Ascending aorta (tissue), 2 donors: ENCODE measurements at regions of chr3 and their contacts with region 1.

Region 1: DNA sequence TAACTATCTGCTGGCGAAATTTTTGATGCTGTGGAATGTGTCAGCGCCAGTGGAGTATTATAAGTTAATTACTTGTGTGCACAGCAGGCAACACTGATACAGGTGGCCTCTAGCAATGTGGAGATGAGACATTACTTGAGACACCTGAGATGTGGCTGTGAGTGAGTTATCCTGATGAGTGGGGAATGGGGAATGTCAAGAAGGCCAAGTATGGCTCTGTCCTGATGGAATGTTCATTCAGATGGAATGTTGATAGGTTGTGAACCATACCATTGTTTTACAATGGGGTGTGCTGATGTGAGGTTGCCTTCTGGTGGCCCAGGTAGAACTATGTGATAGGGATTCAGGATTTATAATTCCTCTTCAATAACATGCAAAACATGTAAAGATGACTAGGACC is 404.8 kb downstream of the PTPRG start:
- DNase-seq: no peak
- H3K4me3 ChIP-seq: no peak overlapping the region
- H3K27ac ChIP-seq: no peak overlapping the region
- H3K4me1 ChIP-seq: peaks cover 0 to 7% of the 10 kb centered on the region in 2 donors
- H3K27me3 ChIP-seq: no peaks in the 10 kb centered on the region
- CTCF ChIP-seq: no peak

Region 2: DNA sequence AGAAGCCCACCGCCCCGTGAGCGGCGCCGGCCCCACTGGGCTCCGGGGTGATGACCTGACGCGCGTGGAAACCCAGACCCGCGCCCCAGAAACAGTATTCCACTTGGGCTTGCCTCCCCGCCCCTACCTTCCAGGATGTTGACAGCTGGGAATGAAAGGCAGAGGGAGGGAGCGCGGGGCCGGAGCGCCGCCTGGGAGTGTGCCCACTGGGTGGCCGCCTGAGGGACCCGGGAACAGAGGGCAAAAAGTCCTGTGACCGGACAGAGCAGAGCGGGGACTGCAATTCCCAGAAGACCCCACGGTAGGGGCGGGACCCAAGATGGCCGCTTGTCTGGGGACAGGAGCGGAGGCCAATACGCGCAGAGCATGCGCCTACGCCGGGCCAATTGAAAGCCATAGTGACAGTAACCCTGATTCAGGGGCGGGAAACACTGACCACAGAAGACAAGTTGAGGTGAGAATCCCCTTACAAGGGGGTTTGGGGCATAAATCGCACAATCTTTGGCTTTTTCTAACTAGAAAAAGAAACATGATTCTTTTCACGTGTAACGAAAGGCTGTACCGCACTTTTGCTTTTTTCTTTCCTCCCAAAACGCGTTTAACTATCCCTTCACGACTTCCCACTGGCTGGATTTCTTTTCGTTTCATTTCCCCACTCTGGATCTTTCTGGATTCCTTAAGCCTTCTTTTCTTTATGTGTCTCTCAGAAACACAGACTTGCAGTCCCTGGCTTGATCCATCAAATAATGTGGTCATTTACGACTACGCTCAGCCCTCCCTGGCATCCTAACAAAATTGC is 714.8 kb before region 1 on chr3 and contains the start of gene FHIT:
- intact Hi-C with region 1: loop called (anchors 10 kb)
- DNase-seq: peak; percentile 87 to 96
- H3K4me3 ChIP-seq: peak within 1 kb of the TSS; percentile 66 to 76
- H3K27ac ChIP-seq: peak within 1 kb of the TSS; percentile 15 to 34
- H3K4me1 ChIP-seq: peaks cover 6 to 7% of the 10 kb centered on the region in 2 donors
- H3K27me3 ChIP-seq: no peaks in the 10 kb centered on the region
- CTCF ChIP-seq: no peak
- total RNA-seq, gene FHIT: 0.21 TPM

Region 3: GRCh38 chr3:62020515-62021105 is 54.4 kb after region 1 on chr3:
- intact Hi-C with region 1: no loop called
- DNase-seq: no peak
- H3K4me3 ChIP-seq: no peak overlapping the region
- H3K27ac ChIP-seq: no peak overlapping the region
- H3K4me1 ChIP-seq: no peaks in the 10 kb centered on the region
- H3K27me3 ChIP-seq: no peaks in the 10 kb centered on the region
- CTCF ChIP-seq: no peak

Region 4: DNA sequence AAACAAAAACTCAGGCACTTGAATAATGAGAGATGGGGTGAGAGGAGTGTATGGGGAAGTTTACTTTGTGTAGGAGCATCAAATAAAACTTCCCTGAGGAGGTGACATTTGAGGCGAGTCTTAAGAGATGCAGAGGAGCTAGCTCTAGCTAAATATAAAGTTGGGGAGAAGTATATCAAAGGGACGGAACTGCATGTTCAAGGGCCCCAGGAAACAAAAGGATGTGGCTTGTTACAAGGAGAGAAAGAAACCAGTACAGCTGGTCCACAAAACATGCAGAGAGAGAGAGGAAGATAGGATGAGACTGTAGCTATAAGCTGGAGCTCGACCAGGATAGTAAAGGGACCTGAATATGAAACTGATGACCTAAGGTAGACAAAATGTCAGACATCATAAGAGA is 389.5 kb after region 1 on chr3:
- intact Hi-C with region 1: no loop called
- DNase-seq: no peak
- H3K4me3 ChIP-seq: no peak overlapping the region
- H3K27ac ChIP-seq: no peak overlapping the region
- H3K4me1 ChIP-seq: no peaks in the 10 kb centered on the region
- H3K27me3 ChIP-seq: no peaks in the 10 kb centered on the region
- CTCF ChIP-seq: no peak